Endothelial cell of umbilical vein (primary cell): ENCODE measurements at regions of chr1 and their contacts with region 1.

Region 1: GRCh38 chr1:67214420-67215174 is 48.3 kb downstream of the IL23R start:
- DNase-seq: peak; percentile 27
- H3K4me3 ChIP-seq: no peak overlapping the region
- H3K27ac ChIP-seq: no peak overlapping the region
- H3K4me1 ChIP-seq: no peaks in the 10 kb centered on the region
- H3K27me3 ChIP-seq: peaks cover 0 to 4% of the 10 kb centered on the region in 2 experiments
- CTCF ChIP-seq: peak; percentile 36 to 48
- POLR2A ChIP-seq: no peak

Region 2: GRCh38 chr1:65958561-65959350 is 1255.8 kb before region 1 on chr1:
- CTCF ChIA-PET with region 1: no interaction called
- POLR2A ChIA-PET with region 1: no interaction called
- dilution Hi-C with region 1: no loop called
- intact Hi-C with region 1: loop called (anchors 5 kb)
- DNase-seq: peak; percentile 73
- H3K4me3 ChIP-seq: no peak overlapping the region
- H3K27ac ChIP-seq: no peak overlapping the region
- H3K4me1 ChIP-seq: peaks cover 10% of the 10 kb centered on the region
- H3K27me3 ChIP-seq: no peaks in the 10 kb centered on the region
- CTCF ChIP-seq: peak; percentile 21 to 29
- POLR2A ChIP-seq: no peak

Region 3: GRCh38 chr1:66521721-66522365 is 692.8 kb before region 1 on chr1:
- CTCF ChIA-PET with region 1: no interaction called
- POLR2A ChIA-PET with region 1: no interaction called
- dilution Hi-C with region 1: no loop called
- intact Hi-C with region 1: no loop called
- DNase-seq: peak; percentile 31
- H3K4me3 ChIP-seq: no peak overlapping the region
- H3K27ac ChIP-seq: no peak overlapping the region
- H3K4me1 ChIP-seq: peaks cover under 1% of the 10 kb centered on the region
- H3K27me3 ChIP-seq: no peaks in the 10 kb centered on the region
- CTCF ChIP-seq: no peak
- POLR2A ChIP-seq: no peak

Region 4: GRCh38 chr1:66996018-66996682 is 218.4 kb before region 1 on chr1:
- CTCF ChIA-PET with region 1: interaction called, 172 read pairs
- POLR2A ChIA-PET with region 1: no interaction called
- dilution Hi-C with region 1: no loop called
- intact Hi-C with region 1: loop called (anchors 1 kb)
- DNase-seq: peak; percentile 83
- H3K4me3 ChIP-seq: no peak overlapping the region
- H3K27ac ChIP-seq: no peak overlapping the region
- H3K4me1 ChIP-seq: no peaks in the 10 kb centered on the region
- H3K27me3 ChIP-seq: no peaks in the 10 kb centered on the region
- CTCF ChIP-seq: peak; percentile 74 to 75
- POLR2A ChIP-seq: no peak

Region 5: DNA sequence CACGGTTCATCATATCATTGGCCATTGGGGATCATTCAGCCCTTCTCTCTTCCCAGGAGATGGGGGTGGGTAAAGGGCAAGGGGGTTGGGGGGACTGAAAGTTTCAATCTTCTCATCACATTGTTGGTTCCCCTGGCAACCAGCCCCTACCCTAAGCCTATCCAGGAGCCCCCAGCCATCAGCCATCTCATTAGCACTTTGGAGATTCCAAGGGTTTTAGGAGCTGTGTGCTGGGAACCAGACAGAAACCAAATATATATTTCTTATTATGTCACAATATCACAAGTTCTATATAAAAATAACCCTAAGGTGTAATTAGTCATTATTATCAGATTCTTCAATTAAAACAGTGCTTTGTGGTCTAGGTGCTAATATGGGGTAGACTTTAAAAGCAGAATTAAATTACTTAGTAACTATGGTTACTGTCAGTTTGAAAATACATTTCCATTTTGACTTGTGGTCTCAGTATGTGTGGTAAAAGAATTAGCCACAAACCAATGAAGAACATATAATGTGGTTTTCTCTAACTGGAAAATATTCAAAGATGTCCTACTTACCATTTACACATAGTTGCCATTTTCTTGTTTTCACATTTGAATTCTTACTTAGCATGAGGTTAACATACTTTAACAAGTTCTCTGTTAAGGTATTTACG is 20.3 kb before region 1 on chr1:
- CTCF ChIA-PET with region 1: interaction called, 12 read pairs
- POLR2A ChIA-PET with region 1: no interaction called
- dilution Hi-C with region 1: no loop called
- intact Hi-C with region 1: no loop called
- DNase-seq: no peak
- H3K4me3 ChIP-seq: no peak overlapping the region
- H3K27ac ChIP-seq: no peak overlapping the region
- H3K4me1 ChIP-seq: no peaks in the 10 kb centered on the region
- H3K27me3 ChIP-seq: peaks cover 4 to 5% of the 10 kb centered on the region in 2 experiments
- CTCF ChIP-seq: no peak
- POLR2A ChIP-seq: no peak

Region 6: GRCh38 chr1:67227196-67227595 is 12.6 kb after region 1 on chr1:
- CTCF ChIA-PET with region 1: interaction called, 44 read pairs
- POLR2A ChIA-PET with region 1: no interaction called
- dilution Hi-C with region 1: no loop called
- intact Hi-C with region 1: no loop called
- DNase-seq: no peak
- H3K4me3 ChIP-seq: no peak overlapping the region
- H3K27ac ChIP-seq: no peak overlapping the region
- H3K4me1 ChIP-seq: no peaks in the 10 kb centered on the region
- H3K27me3 ChIP-seq: peaks cover 4 to 26% of the 10 kb centered on the region in 2 experiments
- CTCF ChIP-seq: no peak
- POLR2A ChIP-seq: no peak

Region 7: DNA sequence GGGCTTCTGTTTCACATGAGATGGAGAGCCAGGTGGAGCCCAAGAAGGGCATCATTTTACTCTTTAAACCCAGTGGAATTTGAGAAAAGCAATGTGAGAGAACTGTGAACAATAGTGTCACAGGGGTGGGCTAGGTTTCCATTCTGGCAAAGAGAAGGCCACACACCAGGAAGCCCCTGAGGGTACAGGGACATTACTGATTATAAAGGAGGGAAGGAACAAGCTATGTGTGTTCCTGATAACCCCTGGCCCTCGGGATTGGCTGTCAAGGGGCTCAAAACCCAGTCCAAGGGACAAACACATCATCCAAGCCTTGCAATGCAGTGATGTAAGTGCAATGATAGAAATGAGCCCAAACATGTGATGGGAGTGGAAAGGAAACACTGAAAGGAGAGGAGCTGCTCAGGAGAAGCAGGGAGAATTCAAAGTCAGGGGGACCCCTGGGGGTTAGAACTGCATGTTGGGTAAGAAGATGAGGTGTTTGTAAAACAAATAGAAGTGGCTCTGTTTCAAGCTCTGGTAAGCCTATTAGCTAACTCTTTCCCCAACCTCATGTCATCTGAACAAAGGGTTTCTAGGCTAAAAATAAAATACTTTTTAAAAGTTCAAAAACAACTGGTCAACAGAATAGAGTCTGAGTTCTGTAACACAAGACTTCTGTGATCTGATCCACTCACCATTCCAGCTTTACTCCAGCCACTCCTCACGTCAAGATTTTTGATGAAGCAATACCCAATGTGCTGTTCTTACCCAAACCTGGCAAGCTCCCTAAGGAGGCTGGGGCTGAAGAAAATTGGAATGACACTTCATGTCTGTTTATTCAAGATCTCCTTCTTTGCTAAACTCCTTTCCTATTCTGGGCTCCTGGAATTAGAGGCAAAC is 41.9 kb after region 1 on chr1:
- CTCF ChIA-PET with region 1: interaction called, 12 read pairs
- POLR2A ChIA-PET with region 1: no interaction called
- dilution Hi-C with region 1: no loop called
- intact Hi-C with region 1: no loop called
- DNase-seq: peak; percentile 64
- H3K4me3 ChIP-seq: no peak overlapping the region
- H3K27ac ChIP-seq: no peak overlapping the region
- H3K4me1 ChIP-seq: peaks cover 14% of the 10 kb centered on the region
- H3K27me3 ChIP-seq: peaks cover 2 to 3% of the 10 kb centered on the region in 2 experiments
- CTCF ChIP-seq: no peak
- POLR2A ChIP-seq: no peak

Region 8: GRCh38 chr1:67308136-67308535 is 93.5 kb after region 1 on chr1:
- CTCF ChIA-PET with region 1: no interaction called
- POLR2A ChIA-PET with region 1: no interaction called
- dilution Hi-C with region 1: no loop called
- intact Hi-C with region 1: no loop called
- DNase-seq: no peak
- H3K4me3 ChIP-seq: no peak overlapping the region
- H3K27ac ChIP-seq: no peak overlapping the region
- H3K4me1 ChIP-seq: no peaks in the 10 kb centered on the region
- H3K27me3 ChIP-seq: peaks cover 22 to 26% of the 10 kb centered on the region in 2 experiments
- CTCF ChIP-seq: no peak
- POLR2A ChIP-seq: no peak

Region 9: GRCh38 chr1:67489643-67490042 is 275.0 kb after region 1 on chr1:
- CTCF ChIA-PET with region 1: interaction called, 49 read pairs
- POLR2A ChIA-PET with region 1: no interaction called
- dilution Hi-C with region 1: no loop called
- intact Hi-C with region 1: no loop called
- DNase-seq: peak; percentile 58
- H3K4me3 ChIP-seq: no peak overlapping the region
- H3K27ac ChIP-seq: no peak overlapping the region
- H3K4me1 ChIP-seq: no peaks in the 10 kb centered on the region
- H3K27me3 ChIP-seq: no peaks in the 10 kb centered on the region
- CTCF ChIP-seq: peak; percentile 24 to 44
- POLR2A ChIP-seq: no peak